ENCODE measurements at regions of chr14 and their contacts with region 1.

Region 1: GRCh38 chr14:81219210-81219758 is 1.5 kb downstream of the GTF2A1 start:
- DNase-seq: peak; percentile 82
- H3K4me3 Mint-ChIP-seq: peak overlapping the region; percentile 89
- H3K27ac Mint-ChIP-seq: peak overlapping the region; percentile 98
- H3K4me1 Mint-ChIP-seq: peaks cover 13% of the 10 kb centered on the region
- H3K27me3 Mint-ChIP-seq: no peaks in the 10 kb centered on the region
- CTCF ChIP-seq: no peak

Region 2: GRCh38 chr14:81200054-81200453 is 19.2 kb before region 1 on chr14:
- CTCF ChIA-PET with region 1: interaction called, 3 read pairs
- intact Hi-C with region 1: loop called (anchors 2 kb)
- DNase-seq: no peak
- H3K4me3 Mint-ChIP-seq: no peak overlapping the region
- H3K27ac Mint-ChIP-seq: no peak overlapping the region
- H3K4me1 Mint-ChIP-seq: peaks cover 10% of the 10 kb centered on the region
- H3K27me3 Mint-ChIP-seq: no peaks in the 10 kb centered on the region
- CTCF ChIP-seq: no peak

Region 3: DNA sequence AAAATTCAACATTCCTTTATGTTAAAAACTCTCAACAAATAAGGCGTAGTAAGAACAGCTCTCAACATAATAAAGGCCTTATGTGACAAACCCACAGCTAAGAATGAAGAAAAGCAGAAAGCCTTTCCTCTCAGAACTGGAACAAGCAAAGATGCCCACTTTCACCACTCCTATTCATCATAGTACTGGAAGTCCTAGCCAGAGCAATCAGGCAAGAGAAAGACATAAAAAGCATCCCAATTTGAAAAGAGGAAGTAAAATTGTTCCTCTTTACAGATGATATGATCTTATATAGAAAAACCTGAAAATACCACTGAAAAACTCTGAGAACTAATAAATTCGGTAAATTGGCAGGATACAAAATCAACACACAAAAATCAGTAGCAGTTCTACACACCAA is 128.8 kb after region 1 on chr14:
- CTCF ChIA-PET with region 1: no interaction called
- intact Hi-C with region 1: no loop called
- DNase-seq: no peak
- H3K4me3 Mint-ChIP-seq: no peak overlapping the region
- H3K27ac Mint-ChIP-seq: no peak overlapping the region
- H3K4me1 Mint-ChIP-seq: no peaks in the 10 kb centered on the region
- H3K27me3 Mint-ChIP-seq: no peaks in the 10 kb centered on the region
- CTCF ChIP-seq: no peak